Activated CD4-positive, alpha-beta T cell treated with anti-CD3 and anti-CD28 coated beads for 36 hours (primary cell): ENCODE measurements at regions of chr12 and their contacts with region 1.

Region 1: GRCh38 chr12:49967042-49967776 is 5.5 kb downstream of the AQP5 start:
- DNase-seq: peak; percentile 97
- ATAC-seq: peak; percentile 92
- H3K4me3 Mint-ChIP-seq: peak overlapping the region; percentile 34
- H3K27ac Mint-ChIP-seq: no peak overlapping the region
- H3K4me1 Mint-ChIP-seq: no peaks in the 10 kb centered on the region
- H3K27me3 Mint-ChIP-seq: peaks cover 32% of the 10 kb centered on the region

Region 2: GRCh38 chr12:49866859-49867579 is 100.2 kb before region 1 on chr12:
- CTCF ChIA-PET with region 1: interaction called, 22 read pairs
- POLR2A ChIA-PET with region 1: no interaction called
- intact Hi-C with region 1: loop called (anchors 1 to 2 kb)
- DNase-seq: peak; percentile 86
- ATAC-seq: peak; percentile 93
- H3K4me3 Mint-ChIP-seq: no peak overlapping the region
- H3K27ac Mint-ChIP-seq: no peak overlapping the region
- H3K4me1 Mint-ChIP-seq: no peaks in the 10 kb centered on the region
- H3K27me3 Mint-ChIP-seq: no peaks in the 10 kb centered on the region

Region 3: DNA sequence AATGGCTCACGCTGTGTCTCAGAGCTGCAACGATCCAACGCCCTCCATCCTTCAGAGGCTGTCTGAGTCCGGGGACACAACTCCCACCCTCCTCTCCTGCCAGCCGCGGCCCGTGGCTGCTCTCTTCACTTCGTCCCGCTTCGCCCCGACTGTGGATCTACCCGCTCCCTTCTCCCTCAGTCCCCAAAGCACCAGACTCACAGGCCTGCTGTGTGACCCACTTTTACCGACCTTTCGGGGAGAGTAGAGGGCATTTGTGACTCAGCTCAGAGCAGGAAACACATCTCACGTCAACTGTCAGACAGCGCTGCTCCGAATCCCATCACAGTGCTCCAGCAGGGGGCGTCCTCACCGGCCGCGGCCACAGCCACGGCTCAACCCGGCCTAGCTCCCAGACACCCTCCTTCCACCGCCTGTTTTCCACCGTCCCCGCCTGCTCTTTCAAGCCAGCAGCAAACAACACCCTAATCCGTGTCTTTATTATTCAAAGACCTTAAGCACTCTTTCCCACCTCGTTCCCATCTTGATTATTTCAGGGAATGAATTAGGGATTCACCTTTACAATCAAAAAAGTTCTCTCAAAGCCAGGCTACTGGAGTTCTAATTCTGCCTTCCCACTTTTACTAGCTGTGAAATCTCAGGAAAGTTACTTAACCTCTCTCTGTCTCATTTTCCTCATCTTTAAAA is 21.7 kb before region 1 on chr12:
- CTCF ChIA-PET with region 1: interaction called, 74 read pairs
- POLR2A ChIA-PET with region 1: no interaction called
- intact Hi-C with region 1: loop called in 1 of 2 experiments (anchors 1 kb)
- DNase-seq: peak; percentile 94
- ATAC-seq: peak; percentile 100
- H3K4me3 Mint-ChIP-seq: peak overlapping the region; percentile 74
- H3K27ac Mint-ChIP-seq: peak overlapping the region; percentile 95
- H3K4me1 Mint-ChIP-seq: peaks cover 19% of the 10 kb centered on the region
- H3K27me3 Mint-ChIP-seq: no peaks in the 10 kb centered on the region

Region 4: GRCh38 chr12:49990273-49990672 is 23.1 kb after region 1 on chr12:
- CTCF ChIA-PET with region 1: interaction called, 98 read pairs
- POLR2A ChIA-PET with region 1: interaction called, 3 read pairs
- intact Hi-C with region 1: no loop called
- DNase-seq: no peak
- ATAC-seq: no peak
- H3K4me3 Mint-ChIP-seq: no peak overlapping the region
- H3K27ac Mint-ChIP-seq: no peak overlapping the region
- H3K4me1 Mint-ChIP-seq: peaks cover 6% of the 10 kb centered on the region
- H3K27me3 Mint-ChIP-seq: no peaks in the 10 kb centered on the region

Region 5: GRCh38 chr12:50043854-50044253 is 76.6 kb after region 1 on chr12:
- CTCF ChIA-PET with region 1: interaction called, 67 read pairs
- POLR2A ChIA-PET with region 1: no interaction called
- intact Hi-C with region 1: loop called in 1 of 2 experiments (anchors 1 kb)
- DNase-seq: peak; percentile 20
- ATAC-seq: peak; percentile 63
- H3K4me3 Mint-ChIP-seq: no peak overlapping the region
- H3K27ac Mint-ChIP-seq: peak overlapping the region; percentile 14
- H3K4me1 Mint-ChIP-seq: peaks cover 27% of the 10 kb centered on the region
- H3K27me3 Mint-ChIP-seq: peaks cover 5% of the 10 kb centered on the region

Region 6: GRCh38 chr12:50074936-50075807 is 108.0 kb after region 1 on chr12:
- CTCF ChIA-PET with region 1: interaction called, 125 read pairs
- POLR2A ChIA-PET with region 1: no interaction called
- intact Hi-C with region 1: loop called (anchors 1 kb)
- DNase-seq: peak; percentile 90
- ATAC-seq: peak; percentile 98
- H3K4me3 Mint-ChIP-seq: no peak overlapping the region
- H3K27ac Mint-ChIP-seq: no peak overlapping the region
- H3K4me1 Mint-ChIP-seq: peaks cover 8% of the 10 kb centered on the region
- H3K27me3 Mint-ChIP-seq: no peaks in the 10 kb centered on the region

Region 7: DNA sequence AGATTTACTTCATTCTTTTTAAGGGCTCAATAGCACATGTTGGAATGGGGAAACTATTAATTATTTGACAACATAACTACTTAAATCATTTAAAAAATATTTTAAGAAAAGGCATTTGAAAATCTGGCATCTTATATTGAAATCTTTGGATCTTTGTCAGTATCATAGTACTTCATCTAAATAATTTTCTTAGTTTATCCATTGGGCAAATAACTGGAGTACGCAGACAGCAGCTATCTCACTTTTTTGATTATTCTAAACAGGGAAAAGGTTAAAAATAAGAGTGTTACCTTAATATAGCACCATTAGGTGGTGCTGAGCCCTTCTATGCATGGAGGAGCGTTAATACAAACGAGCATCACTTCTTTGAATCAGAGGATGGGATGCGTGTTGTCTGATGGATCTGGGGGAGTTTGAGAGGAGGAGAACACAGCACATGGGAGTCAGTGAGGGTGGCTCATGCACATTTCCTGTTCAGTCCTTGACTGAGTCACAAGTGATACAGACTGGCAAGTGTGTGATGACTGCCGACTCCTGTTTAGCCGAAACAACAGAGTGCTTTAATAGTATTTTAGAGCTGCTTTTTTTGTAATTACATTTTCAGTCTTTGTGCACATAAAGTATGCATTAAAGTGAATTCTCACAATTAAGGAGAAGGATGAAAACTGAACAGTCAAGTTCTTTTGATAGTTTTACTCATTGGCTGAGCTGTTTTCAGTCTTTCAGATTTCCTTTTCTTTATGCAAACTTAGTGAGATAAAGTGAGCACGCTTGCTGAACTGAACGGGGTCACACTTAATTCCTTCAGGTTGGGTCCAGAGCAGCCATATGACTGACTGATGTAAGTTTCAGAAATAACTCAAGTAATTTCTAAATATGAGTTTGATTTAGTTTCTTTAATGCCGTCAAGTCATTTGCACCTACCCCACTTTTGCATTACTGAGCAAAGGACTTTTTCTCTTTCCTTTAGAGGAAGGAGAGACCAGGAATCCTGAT is 630.3 kb after region 1 on chr12:
- CTCF ChIA-PET with region 1: no interaction called
- POLR2A ChIA-PET with region 1: no interaction called
- intact Hi-C with region 1: no loop called
- DNase-seq: peak; percentile 78
- ATAC-seq: peak; percentile 100
- H3K4me3 Mint-ChIP-seq: peak overlapping the region; percentile 44
- H3K27ac Mint-ChIP-seq: peak overlapping the region; percentile 90
- H3K4me1 Mint-ChIP-seq: peaks cover 45% of the 10 kb centered on the region
- H3K27me3 Mint-ChIP-seq: no peaks in the 10 kb centered on the region